HEK293T (cell line): ENCODE measurements at regions of chr20 and their contacts with region 1.

Region 1: DNA sequence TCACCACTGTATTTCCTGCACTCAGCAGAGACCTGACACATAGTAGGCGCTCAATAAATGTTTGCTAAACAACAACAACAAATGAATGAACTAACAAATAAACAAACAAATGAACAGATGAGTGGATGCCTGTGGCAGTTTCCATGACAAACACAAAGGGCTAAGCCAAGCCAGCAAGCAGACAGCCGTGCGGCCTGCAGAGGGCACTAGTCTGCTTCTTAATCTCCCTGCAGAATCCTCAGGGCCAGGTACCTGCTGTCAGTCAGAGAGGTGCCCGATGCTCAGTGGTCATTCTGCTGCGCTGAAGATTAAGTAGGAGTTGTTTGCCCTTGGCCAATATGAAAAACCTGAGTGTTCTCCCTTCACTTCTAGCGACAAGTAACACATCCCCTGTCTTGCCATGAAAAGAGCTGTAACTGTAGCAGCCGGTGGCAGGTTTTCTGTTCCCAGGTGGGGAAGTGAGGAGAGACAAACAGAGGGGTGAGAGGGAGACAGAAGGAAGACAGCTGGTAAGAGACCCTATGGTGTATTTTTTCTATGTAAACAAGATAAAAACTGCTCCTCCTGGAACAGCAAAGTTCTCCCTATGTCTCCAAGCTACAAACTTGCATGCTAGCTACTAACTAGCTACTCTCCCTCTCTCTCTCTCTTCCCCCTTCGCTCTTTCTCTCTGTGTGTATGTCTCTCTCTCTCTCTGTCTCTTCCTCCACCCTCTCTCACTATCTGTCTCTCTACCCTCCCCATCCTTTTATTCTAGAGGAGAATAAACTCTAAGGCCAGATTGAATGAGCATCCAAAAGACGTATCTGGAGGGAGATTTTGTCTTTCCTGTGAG is at the start of gene MC3R:
- DNase-seq: peak; percentile 53

Region 2: GRCh38 chr20:56194062-56194461 is 54.1 kb before region 1 on chr20:
- CTCF ChIA-PET with region 1: no interaction called
- POLR2A ChIA-PET with region 1: no interaction called
- DNase-seq: no peak

Region 3: DNA sequence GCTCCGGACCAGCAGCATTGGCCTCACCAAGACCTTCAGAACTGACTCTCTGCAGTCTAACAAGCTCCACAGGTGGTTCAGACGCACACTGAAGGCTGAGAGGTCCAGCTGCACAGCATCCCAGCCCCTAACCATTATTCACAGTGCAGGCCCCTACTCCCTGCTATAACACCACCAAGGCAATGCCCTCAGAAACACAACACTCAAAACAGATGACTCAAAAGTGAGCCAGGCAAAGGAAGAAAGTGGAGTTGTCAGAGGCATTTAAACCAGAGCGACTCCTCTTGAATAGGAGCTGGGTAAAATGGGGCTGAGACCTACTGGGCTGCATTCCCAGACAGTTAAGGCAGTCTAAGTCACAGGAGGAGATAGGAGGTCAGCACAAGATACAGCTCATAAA is 20.1 kb before region 1 on chr20:
- CTCF ChIA-PET with region 1: no interaction called
- POLR2A ChIA-PET with region 1: no interaction called
- DNase-seq: no peak

Region 4: GRCh38 chr20:56259948-56260347 is 11.8 kb after region 1 on chr20:
- CTCF ChIA-PET with region 1: no interaction called
- POLR2A ChIA-PET with region 1: no interaction called
- DNase-seq: no peak

Region 5: DNA sequence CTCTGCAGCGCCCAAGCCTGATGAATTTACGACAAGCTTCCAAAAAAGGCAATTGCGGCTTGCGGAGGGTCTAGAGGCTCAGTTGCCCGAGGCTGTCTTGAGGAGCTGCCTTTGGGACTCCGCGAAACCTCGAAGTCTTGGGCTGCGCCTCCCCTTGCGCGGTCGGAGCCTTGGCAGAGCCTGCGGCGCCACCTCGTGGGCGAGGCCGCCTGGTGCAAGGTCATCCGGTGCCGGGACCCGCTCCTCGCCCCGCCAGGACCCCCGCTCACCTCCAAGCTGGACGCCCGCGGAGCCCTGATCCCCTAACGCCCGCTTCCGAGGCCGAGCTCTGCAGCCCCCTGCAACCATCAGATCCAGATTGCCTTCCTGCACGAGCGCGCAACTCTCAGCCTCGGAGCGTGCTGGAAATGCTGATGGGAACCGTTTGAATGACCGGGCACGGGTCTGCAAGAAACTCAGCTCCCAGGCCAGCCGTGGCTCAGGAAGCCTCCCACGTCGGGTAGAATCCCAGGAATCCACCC is 95.8 kb after region 1 on chr20:
- CTCF ChIA-PET with region 1: interaction called, 13 read pairs
- POLR2A ChIA-PET with region 1: no interaction called
- DNase-seq: peak; percentile 84